Panc1 (cell line): ENCODE measurements at regions of chr10 and their contacts with region 1.

Region 1: GRCh38 chr10:60466267-60467201 is 76.9 kb upstream of the ANK3 start:
- DNase-seq: peak; percentile 50
- ATAC-seq: peak; percentile 94
- H3K4me3 ChIP-seq: no peak overlapping the region
- H3K27ac ChIP-seq: peak overlapping the region; percentile 73; the same call in 1 of the 2 replicates
- H3K4me1 ChIP-seq: peaks cover 6% of the 10 kb centered on the region; the same call in 1 of the 2 replicates
- H3K27me3 ChIP-seq: no peaks in the 10 kb centered on the region
- CTCF ChIP-seq: peak; percentile 8; the same call in 1 of the 2 replicates

Region 2: GRCh38 chr10:60148264-60148840 is 318.2 kb before region 1 on chr10:
- CTCF ChIA-PET with region 1: no interaction called
- POLR2A ChIA-PET with region 1: no interaction called
- in situ Hi-C with region 1: no loop called
- intact Hi-C with region 1: no loop called
- DNase-seq: no peak
- ATAC-seq: no peak
- H3K4me3 ChIP-seq: no peak overlapping the region
- H3K27ac ChIP-seq: no peak overlapping the region
- H3K4me1 ChIP-seq: no peaks in the 10 kb centered on the region
- H3K27me3 ChIP-seq: no peaks in the 10 kb centered on the region
- CTCF ChIP-seq: no peak

Region 3: GRCh38 chr10:60425392-60426110 is 41.0 kb before region 1 on chr10:
- CTCF ChIA-PET with region 1: no interaction called
- POLR2A ChIA-PET with region 1: interaction called, 17 read pairs
- in situ Hi-C with region 1: no loop called
- intact Hi-C with region 1: no loop called
- DNase-seq: no peak
- ATAC-seq: no peak
- H3K4me3 ChIP-seq: no peak overlapping the region
- H3K27ac ChIP-seq: no peak overlapping the region
- H3K4me1 ChIP-seq: no peaks in the 10 kb centered on the region
- H3K27me3 ChIP-seq: peaks cover 7% of the 10 kb centered on the region; the same call in 1 of the 2 replicates
- CTCF ChIP-seq: no peak